ENCODE measurements at regions of chr7 and their contacts with region 1.

Region 1: GRCh38 chr7:1473864-1474512 is 14.7 kb upstream of the MICALL2 start:
- DNase-seq: peak; percentile 89 to 94
- ATAC-seq: peak; percentile 70 to 87 (median 77)
- H3K4me3 ChIP-seq: no peak overlapping the region
- H3K27ac ChIP-seq: no peak overlapping the region
- H3K4me1 ChIP-seq: no peaks in the 10 kb centered on the region
- H3K27me3 ChIP-seq: no peaks in the 10 kb centered on the region
- CTCF ChIP-seq: peak; percentile 88

Region 2: DNA sequence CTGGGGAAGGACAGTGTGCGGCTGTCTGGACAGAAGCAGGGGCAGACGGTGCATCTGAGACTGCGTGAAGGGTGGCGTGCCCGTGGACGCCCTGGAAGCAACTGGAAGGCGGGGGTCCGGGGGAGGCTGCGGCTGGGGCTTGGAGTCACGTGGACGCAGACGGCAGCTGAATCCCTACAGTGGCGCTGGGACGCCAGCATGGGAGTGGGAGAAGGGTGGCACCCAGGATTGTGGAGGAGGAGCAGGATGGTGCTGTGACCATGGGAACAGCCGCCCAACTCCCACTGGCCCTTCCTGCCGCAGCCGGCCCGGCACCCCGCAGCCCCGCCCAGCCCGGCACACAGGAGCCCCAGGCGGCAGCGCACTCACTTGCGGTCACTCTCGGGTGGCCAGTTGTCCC is 20.5 kb after region 1 on chr7:
- intact Hi-C with region 1: loop called in 1 of 2 experiments (anchors 2 kb)
- DNase-seq: no peak
- ATAC-seq: no peak
- H3K4me3 ChIP-seq: no peak overlapping the region
- H3K27ac ChIP-seq: no peak overlapping the region
- H3K4me1 ChIP-seq: no peaks in the 10 kb centered on the region
- H3K27me3 ChIP-seq: no peaks in the 10 kb centered on the region
- CTCF ChIP-seq: no peak

Region 3: GRCh38 chr7:1520574-1521234 is 46.7 kb after region 1 on chr7:
- intact Hi-C with region 1: no loop called
- DNase-seq: no peak
- ATAC-seq: peak in 3 of 4 donors; percentile 14 to 41 (median 20)
- H3K4me3 ChIP-seq: no peak overlapping the region
- H3K27ac ChIP-seq: no peak overlapping the region
- H3K4me1 ChIP-seq: no peaks in the 10 kb centered on the region
- H3K27me3 ChIP-seq: peaks cover 0 to 2% (median 0%) of the 10 kb centered on the region in 3 donors
- CTCF ChIP-seq: no peak

Measured in psoas muscle (tissue), 8 donors.